ENCODE measurements at regions of chr18 and their contacts with region 1.

Region 1: DNA sequence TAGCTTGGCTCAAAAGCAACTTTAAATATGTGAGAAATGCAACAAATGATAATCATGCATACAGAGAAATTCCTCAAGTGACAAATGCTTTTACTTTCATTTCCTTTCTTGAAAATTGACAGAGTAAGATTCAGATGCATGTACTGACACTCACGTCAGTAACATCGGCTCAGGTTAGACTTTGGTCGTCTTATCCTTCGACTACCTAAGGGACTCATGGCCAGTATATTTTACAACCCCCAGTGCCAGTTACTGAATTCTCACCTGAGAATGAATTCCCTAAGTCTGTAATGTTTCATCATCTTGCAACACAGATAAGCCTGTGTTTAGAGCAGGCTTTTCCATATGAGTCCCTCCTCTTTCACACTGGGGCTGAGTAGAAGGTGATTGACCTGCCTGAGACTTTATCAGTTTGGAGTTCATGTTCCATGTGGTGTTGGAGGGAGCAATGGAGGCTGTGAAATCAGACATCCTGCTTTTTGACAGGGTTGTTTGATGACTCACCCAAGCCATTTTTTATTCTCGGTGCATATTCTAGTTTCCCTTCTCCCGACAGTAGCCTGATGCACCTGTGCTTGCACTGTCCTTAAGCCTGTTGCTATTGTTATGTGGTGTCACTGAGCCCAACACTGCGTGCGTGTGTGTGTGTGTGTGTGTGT is 30.5 kb upstream of the ATP8B1 start:
- DNase-seq: no peak
- ATAC-seq: peak; percentile 38
- H3K4me3 Mint-ChIP-seq: peak overlapping the region; percentile 72
- H3K27ac Mint-ChIP-seq: peak overlapping the region; percentile 87
- H3K4me1 Mint-ChIP-seq: peaks cover 64% of the 10 kb centered on the region
- H3K27me3 Mint-ChIP-seq: no peaks in the 10 kb centered on the region
- CTCF ChIP-seq: no peak

Region 2: DNA sequence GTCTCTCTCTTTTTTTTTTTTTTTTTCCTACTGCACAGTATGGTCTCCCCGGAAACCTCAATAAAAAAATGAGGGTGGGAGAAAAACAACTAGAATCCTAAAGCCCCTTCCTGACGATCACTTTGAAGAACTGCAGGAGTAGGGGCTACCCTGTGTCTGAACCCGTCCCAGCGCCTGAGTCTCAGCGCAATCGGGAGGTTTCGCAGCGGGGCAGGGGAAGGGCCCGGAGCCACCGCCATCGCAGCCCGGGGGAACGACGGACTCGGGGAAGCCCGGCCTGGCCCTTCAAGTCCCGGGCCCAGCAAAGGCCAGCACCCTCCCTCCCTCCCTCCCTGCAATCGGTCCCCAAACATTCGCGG is 212.3 kb before region 1 on chr18:
- CTCF ChIA-PET with region 1: no interaction called
- POLR2A ChIA-PET with region 1: interaction called, 32 read pairs
- intact Hi-C with region 1: loop called (anchors 1 kb)
- DNase-seq: no peak
- ATAC-seq: peak; percentile 9
- H3K4me3 Mint-ChIP-seq: peak overlapping the region; percentile 96
- H3K27ac Mint-ChIP-seq: peak overlapping the region; percentile 98
- H3K4me1 Mint-ChIP-seq: peaks cover 29% of the 10 kb centered on the region
- H3K27me3 Mint-ChIP-seq: no peaks in the 10 kb centered on the region
- CTCF ChIP-seq: no peak

Region 3: GRCh38 chr18:57635003-57635822 is 198.4 kb before region 1 on chr18:
- CTCF ChIA-PET with region 1: interaction called, 5 read pairs
- POLR2A ChIA-PET with region 1: interaction called, 19 read pairs
- intact Hi-C with region 1: loop called (anchors 1 kb)
- DNase-seq: no peak
- ATAC-seq: no peak
- H3K4me3 Mint-ChIP-seq: no peak overlapping the region
- H3K27ac Mint-ChIP-seq: peak overlapping the region; percentile 56
- H3K4me1 Mint-ChIP-seq: peaks cover 35% of the 10 kb centered on the region
- H3K27me3 Mint-ChIP-seq: no peaks in the 10 kb centered on the region
- CTCF ChIP-seq: no peak

Region 4: DNA sequence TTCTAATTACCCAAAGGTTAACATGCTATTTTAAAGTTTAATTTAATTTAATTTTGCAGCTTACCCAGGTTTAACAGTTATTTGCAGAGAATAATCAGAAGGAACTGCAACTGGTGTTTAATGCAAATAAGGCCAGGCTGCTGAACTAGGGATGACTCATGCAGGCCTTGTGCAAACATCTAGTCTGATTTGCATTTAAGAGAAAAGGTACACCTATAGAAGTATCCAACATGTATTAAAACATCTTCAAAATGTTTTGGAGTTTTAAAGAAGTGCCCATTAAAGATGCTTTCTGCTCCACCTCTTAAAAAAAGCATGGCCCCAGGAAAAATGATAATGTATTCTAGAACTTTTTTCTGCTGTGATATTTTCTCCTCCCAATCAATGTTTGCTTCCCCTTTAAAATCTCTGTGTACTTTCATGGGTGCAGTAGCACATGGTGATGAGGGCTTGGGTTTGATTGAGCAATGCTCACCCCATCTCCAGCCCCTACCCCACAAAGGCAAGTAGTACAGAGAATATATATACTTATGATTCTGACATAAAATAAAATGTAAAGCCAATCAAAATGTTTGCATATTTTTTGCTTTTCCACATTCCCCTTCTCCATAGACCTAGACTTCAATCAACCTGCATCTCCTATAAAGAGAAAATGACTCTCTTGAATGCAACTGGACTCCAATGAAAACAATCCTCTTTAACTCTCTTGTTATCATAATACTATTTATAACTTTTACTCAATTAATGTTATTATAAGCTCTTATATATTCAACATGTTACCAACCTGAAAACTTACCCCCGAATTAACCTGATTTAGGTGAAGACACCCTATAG is 84.6 kb before region 1 on chr18:
- CTCF ChIA-PET with region 1: no interaction called
- POLR2A ChIA-PET with region 1: interaction called, 7 read pairs
- intact Hi-C with region 1: loop called (anchors 2 kb)
- DNase-seq: no peak
- ATAC-seq: peak; percentile 93
- H3K4me3 Mint-ChIP-seq: peak overlapping the region; percentile 56
- H3K27ac Mint-ChIP-seq: peak overlapping the region; percentile 69
- H3K4me1 Mint-ChIP-seq: peaks cover 40% of the 10 kb centered on the region
- H3K27me3 Mint-ChIP-seq: no peaks in the 10 kb centered on the region
- CTCF ChIP-seq: no peak

Region 5: GRCh38 chr18:57846258-57846657 is 12.7 kb after region 1 on chr18:
- CTCF ChIA-PET with region 1: no interaction called
- POLR2A ChIA-PET with region 1: interaction called, 6 read pairs
- intact Hi-C with region 1: loop called (anchors 1 kb)
- DNase-seq: no peak
- ATAC-seq: no peak
- H3K4me3 Mint-ChIP-seq: no peak overlapping the region
- H3K27ac Mint-ChIP-seq: no peak overlapping the region
- H3K4me1 Mint-ChIP-seq: peaks cover 22% of the 10 kb centered on the region
- H3K27me3 Mint-ChIP-seq: no peaks in the 10 kb centered on the region
- CTCF ChIP-seq: no peak

Region 6: DNA sequence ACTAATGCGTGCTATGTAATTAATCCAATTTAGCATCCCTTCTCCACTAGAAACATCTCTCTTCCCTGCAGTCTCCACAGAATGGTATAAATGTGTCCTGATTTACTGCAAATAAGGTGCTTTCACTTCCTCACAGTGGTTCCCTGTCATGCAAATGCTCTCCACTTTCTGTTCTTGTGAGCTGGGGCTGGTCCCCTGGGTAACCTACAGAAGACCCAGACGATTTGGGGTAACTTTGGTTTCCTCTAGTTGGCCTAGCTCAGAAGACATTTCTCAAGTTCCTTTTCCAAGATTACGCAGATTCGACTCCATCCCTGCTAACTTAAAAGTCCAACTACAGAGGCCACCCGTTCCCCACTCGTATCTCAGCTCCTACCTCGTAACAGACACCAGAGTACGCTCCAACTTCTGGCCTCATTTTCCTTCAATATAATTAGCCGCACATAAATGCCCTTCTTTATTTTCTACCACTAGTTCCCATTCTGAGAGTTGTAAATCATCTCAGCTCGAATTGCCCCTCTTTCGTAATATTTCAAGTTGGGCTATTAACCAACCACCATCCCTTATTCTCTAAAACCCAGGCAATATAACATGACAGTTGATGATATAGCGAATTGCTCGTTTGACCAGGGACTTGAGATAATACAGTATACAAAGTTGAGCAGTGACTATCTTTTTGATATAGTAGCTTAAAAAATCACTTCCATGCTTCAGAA is 181.7 kb after region 1 on chr18:
- CTCF ChIA-PET with region 1: no interaction called
- POLR2A ChIA-PET with region 1: no interaction called
- intact Hi-C with region 1: loop called (anchors 1 kb)
- DNase-seq: peak; percentile 35
- ATAC-seq: peak; percentile 98
- H3K4me3 Mint-ChIP-seq: peak overlapping the region; percentile 55
- H3K27ac Mint-ChIP-seq: peak overlapping the region; percentile 78
- H3K4me1 Mint-ChIP-seq: peaks cover 32% of the 10 kb centered on the region
- H3K27me3 Mint-ChIP-seq: no peaks in the 10 kb centered on the region
- CTCF ChIP-seq: no peak

Region 7: DNA sequence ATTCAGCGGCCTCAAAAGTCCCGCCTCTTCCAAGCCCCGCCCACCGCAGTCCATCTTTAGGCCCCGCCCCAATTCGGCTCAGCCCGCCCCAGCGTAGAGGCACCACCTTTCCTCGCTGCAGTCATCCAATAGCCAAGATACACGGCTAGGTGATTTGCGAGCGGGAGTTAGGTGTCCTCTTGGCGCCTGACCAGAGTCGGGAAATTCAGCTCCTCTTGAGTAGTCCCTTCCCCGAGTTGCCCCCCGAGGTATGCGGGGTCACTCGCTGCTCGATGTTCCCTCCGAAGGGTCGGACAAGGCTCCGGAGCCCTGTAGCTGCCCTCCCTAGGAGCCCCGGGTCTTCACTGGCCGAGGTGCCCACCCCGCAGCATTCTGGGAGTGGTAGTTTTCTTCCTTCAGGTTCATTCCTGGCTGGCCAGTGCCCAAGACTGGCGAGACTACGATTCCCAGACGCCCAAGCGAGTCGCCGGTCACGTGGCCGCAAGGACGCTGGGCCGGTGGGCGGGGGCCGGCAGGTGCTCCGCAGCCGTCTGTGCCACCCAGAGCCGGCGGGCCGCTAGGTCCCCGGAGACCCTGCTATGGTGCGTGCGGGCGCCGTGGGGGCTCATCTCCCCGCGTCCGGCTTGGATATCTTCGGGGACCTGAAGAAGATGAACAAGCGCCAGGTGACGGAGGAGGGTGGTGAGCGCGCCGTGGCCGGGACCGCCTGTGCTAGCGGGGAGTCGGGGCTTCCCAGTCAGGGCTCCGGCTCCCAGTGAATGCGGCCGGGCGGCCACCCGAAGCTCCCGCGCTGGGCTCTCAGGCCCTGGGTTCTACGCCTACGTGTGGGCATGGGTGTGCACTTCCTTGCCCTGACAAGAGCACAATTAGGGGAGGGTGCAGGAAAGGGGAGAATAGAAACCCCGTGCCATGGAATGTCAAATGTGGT is 1306.1 kb after region 1 on chr18 and contains the start of gene SEC11C:
- CTCF ChIA-PET with region 1: no interaction called
- POLR2A ChIA-PET with region 1: no interaction called
- intact Hi-C with region 1: loop called (anchors 1 kb)
- DNase-seq: peak; percentile 93
- ATAC-seq: peak; percentile 84
- H3K4me3 Mint-ChIP-seq: peak within 1 kb of the TSS; percentile 95
- H3K27ac Mint-ChIP-seq: peak within 1 kb of the TSS; percentile 100
- H3K4me1 Mint-ChIP-seq: peaks cover 44% of the 10 kb centered on the region
- H3K27me3 Mint-ChIP-seq: peaks cover 8% of the 10 kb centered on the region
- CTCF ChIP-seq: no peak
- total RNA-seq, gene SEC11C: 112 and 126 TPM in 2 replicates

Measured in activated B cell treated with CpG ODN at 0.5 μM for 24 hours (primary cell).